Naive thymus-derived CD4-positive, alpha-beta T cell (primary cell): ENCODE measurements at regions of chr6 and their contacts with region 1.

Region 1: DNA sequence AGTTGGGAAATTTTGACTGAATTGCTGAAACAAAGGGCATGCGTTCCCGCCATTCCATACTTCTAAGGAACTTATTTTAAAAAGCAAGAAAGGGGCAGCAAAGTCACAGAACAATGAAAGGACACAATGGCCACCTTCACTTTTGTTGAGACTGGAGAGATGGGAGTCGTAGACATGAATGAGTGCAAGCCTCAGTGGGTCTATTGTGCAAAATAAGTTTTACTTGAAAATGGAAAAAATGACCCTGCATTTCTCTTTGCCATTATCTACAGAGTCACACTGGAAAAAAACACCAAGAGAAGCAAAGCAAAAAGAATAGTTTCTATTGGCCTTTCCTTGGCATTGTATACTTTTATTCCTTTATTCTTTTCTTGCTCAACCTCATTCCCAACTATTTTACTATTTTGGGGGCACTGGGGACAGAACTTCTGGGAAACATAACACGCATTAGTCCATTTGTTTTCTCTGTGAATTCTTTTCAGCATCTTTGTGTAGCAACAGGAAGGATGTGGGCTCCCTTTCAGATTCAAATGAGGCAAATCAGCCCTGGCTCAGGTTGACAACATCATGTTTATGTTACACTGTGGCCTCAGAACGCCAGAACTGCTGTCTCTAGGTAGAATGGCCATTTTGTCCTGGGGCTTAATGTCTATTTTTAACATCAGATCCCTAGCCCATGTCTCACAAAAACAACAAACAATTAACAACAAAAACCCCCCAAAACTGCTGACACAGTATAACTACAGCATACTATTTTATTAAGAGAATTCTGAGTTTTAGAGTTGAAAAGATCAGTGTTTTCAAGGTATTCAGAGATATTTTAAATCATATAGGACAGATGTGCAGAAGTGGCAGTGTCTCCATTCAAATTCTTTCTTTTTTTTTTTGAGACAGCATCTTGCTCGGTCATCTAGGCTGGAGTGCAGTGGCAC is 122.2 kb downstream of the FYN start:
- DNase-seq: peak in 7 of 9 donors; percentile 72 to 85 (median 81)
- ATAC-seq: peak; percentile 94
- H3K4me3 ChIP-seq: peak overlapping the region; percentile 41
- H3K4me3 Mint-ChIP-seq: peak overlapping the region; percentile 58 to 82 (median 73)
- H3K27ac ChIP-seq: peak overlapping the region; percentile 97
- H3K27ac Mint-ChIP-seq: peak overlapping the region; percentile 93 to 100 (median 98)
- H3K4me1 ChIP-seq: peaks cover 94 to 95% of the 10 kb centered on the region in 2 donors
- H3K4me1 Mint-ChIP-seq: peaks cover 67 to 100% (median 99%) of the 10 kb centered on the region in 7 donors
- H3K27me3 ChIP-seq: no peaks in the 10 kb centered on the region
- H3K27me3 Mint-ChIP-seq: no peaks in the 10 kb centered on the region

Region 2: GRCh38 chr6:110554966-110555460 is 1196.0 kb before region 1 on chr6:
- CTCF ChIA-PET with region 1: no interaction called
- POLR2A ChIA-PET with region 1: no interaction called
- intact Hi-C with region 1: no loop called
- DNase-seq: no peak
- ATAC-seq: no peak
- H3K4me3 ChIP-seq: no peak overlapping the region
- H3K4me3 Mint-ChIP-seq: no peak overlapping the region
- H3K27ac ChIP-seq: no peak overlapping the region
- H3K27ac Mint-ChIP-seq: no peak overlapping the region
- H3K4me1 ChIP-seq: peaks cover under 1 to 9% of the 10 kb centered on the region in 2 donors
- H3K4me1 Mint-ChIP-seq: peaks cover 2 to 9% (median 7%) of the 10 kb centered on the region in 7 donors
- H3K27me3 ChIP-seq: no peaks in the 10 kb centered on the region
- H3K27me3 Mint-ChIP-seq: peaks cover 5 to 14% (median 10%) of the 10 kb centered on the region in 5 donors

Region 3: DNA sequence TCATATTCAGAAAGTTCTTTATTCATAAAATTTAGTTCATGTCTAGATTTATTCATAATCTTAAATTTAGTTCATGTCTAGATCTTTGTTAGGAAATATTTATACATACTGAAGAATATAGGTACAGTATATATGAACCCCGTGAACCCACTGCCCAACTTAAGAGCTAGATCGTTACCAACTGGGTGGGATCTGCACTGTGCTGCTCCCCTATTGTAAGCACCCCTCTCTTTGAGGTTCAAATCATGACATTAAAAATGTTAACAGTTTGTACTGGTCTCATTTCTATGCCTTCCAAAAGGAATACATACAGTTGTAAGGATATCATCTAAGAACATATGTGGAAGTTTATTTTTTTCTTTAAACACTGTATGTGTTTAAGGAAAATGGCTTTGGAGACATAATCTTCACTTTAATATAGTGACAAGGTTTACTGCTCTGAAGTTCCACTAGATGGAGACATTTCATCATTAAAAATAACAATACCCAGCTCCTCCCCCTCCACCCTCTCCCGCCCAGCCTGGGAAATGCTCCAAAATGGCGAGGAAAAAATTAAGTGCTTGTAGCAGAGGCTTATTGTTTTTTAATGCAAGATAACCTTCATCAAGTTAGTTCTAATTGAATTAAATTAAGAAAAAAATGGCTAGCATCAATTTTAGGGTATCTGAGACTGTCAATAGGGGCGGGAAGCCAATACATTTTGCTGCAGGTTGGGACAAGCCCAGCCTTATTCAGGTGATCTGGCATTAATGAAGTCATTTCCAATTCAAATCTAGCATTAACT is 41.2 kb before region 1 on chr6:
- CTCF ChIA-PET with region 1: interaction called, 13 read pairs
- POLR2A ChIA-PET with region 1: interaction called, 3 read pairs
- intact Hi-C with region 1: loop called (anchors 1 to 2 kb)
- DNase-seq: peak in 8 of 9 donors; percentile 43 to 78 (median 71)
- ATAC-seq: peak; percentile 89
- H3K4me3 ChIP-seq: no peak overlapping the region
- H3K4me3 Mint-ChIP-seq: peak overlapping the region in 8 of 10 donors; percentile 2 to 67 (median 53)
- H3K27ac ChIP-seq: peak overlapping the region; percentile 59
- H3K27ac Mint-ChIP-seq: peak overlapping the region; percentile 53 to 98 (median 93)
- H3K4me1 ChIP-seq: peaks cover 32 to 43% of the 10 kb centered on the region in 2 donors
- H3K4me1 Mint-ChIP-seq: peaks cover 32 to 64% (median 56%) of the 10 kb centered on the region in 7 donors
- H3K27me3 ChIP-seq: no peaks in the 10 kb centered on the region
- H3K27me3 Mint-ChIP-seq: no peaks in the 10 kb centered on the region

Region 4: DNA sequence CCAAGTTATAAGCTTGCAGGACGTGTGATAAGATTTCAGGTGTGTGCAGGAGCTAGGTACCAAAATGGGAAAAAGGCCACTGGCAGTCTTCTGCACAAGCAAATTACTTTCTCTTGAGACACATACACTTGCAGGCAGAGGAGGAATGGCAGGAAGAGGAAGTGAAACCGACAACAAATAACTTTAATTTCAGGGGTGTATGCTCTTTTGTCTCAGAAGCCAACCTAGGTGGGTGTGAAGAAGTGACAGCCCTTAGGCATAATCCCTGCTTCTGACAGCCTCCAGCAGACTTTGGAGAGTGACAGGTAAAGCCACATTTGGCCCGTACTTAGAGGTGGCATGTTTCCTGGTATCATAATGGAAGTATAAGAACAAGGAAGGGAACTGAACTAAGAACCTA is 26.5 kb before region 1 on chr6:
- CTCF ChIA-PET with region 1: interaction called, 6 read pairs
- POLR2A ChIA-PET with region 1: interaction called, 8 read pairs
- intact Hi-C with region 1: loop called in 1 of 2 experiments (anchors 2 kb)
- DNase-seq: peak in 7 of 9 donors; percentile 26 to 62 (median 56)
- ATAC-seq: peak; percentile 75
- H3K4me3 ChIP-seq: peak overlapping the region; percentile 11
- H3K4me3 Mint-ChIP-seq: peak overlapping the region; percentile 70 to 87 (median 76)
- H3K27ac ChIP-seq: peak overlapping the region; percentile 76
- H3K27ac Mint-ChIP-seq: peak overlapping the region; percentile 87 to 98 (median 92)
- H3K4me1 ChIP-seq: peaks cover 37 to 73% of the 10 kb centered on the region in 2 donors
- H3K4me1 Mint-ChIP-seq: peaks cover 43 to 97% (median 87%) of the 10 kb centered on the region in 7 donors
- H3K27me3 ChIP-seq: no peaks in the 10 kb centered on the region
- H3K27me3 Mint-ChIP-seq: no peaks in the 10 kb centered on the region

Region 5: DNA sequence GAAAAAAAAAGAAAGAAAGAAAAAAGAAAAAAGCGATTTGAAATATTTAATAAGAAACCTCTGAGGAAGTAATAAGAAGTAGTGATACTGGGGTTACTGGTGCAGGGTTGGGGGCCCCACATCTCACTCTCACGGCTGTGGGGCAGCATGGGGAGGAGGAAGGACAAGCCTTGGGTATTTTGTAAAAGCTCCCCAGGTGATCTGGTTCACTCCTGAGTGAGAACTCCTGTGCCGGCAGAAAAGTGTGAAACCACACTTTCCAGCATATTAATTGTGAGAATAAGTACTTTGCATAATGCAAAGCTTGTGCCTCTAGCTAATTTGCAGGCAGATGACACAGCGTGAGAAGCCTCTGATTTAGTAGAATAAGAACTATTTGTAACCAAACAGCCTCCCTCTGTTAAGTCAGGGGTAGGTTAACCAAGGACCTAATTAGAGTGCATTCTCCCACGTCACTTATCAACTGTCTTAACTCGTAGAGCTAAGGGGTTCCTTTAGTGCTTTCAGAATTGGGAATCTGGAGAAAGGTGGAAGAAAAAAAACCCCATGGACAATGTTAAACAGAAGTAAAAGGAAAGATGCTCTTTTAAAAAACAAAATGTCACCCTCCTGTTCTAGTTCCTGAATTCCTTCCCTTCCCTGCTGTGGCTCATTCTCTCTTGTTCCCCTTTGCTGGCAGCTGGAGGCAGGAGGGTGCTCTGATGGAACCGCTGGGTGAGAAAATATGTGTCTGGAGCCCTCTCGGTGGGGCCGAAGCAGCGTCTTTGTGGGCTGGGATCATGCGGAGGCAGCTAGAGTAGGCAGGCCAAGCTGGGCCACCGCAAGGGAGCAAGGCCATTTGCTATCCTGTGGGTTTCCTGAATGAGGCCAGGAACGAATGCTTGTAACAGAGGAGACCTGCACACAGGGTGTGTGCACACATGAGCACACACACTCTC is 13.5 kb after region 1 on chr6:
- CTCF ChIA-PET with region 1: interaction called, 4 read pairs
- POLR2A ChIA-PET with region 1: interaction called, 9 read pairs
- intact Hi-C with region 1: loop called (anchors 1 kb)
- DNase-seq: peak in 2 of 9 donors; percentile 48 to 63
- ATAC-seq: peak; percentile 23
- H3K4me3 ChIP-seq: peak overlapping the region; percentile 18
- H3K4me3 Mint-ChIP-seq: peak overlapping the region; percentile 48 to 94 (median 69)
- H3K27ac ChIP-seq: peak overlapping the region; percentile 97
- H3K27ac Mint-ChIP-seq: peak overlapping the region; percentile 84 to 100 (median 98)
- H3K4me1 ChIP-seq: peaks cover 90 to 93% of the 10 kb centered on the region in 2 donors
- H3K4me1 Mint-ChIP-seq: peaks cover 74 to 100% (median 99%) of the 10 kb centered on the region in 7 donors
- H3K27me3 ChIP-seq: no peaks in the 10 kb centered on the region
- H3K27me3 Mint-ChIP-seq: no peaks in the 10 kb centered on the region

Region 6: DNA sequence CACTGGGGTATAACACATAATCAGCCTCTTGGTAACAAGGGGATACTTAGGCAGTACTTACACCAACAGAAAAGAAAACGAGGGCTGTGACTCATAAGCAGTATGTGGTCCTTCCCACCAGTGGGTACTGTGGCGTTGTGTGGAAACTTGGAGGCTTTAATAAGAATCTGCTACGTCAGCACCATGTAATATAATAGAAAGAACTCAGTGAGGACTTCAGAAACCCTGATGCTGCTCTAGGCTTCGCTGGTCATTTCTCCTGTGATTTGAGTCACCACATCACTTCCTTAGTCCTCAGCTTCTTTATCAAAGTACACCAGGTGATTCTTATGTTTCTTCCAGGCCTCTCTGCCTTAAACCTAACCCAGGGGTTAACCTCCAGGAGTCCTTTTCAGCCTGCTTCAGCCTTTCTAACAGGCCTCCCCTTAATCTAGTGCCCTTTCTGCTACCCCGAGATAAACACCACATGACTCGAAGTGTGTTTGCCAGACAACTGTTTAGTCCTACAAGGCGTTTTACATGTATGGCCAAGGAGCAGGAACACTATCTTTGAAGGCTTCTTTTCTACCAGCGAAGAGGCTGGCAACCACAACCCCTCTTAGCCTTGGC is 53.7 kb after region 1 on chr6:
- CTCF ChIA-PET with region 1: no interaction called
- POLR2A ChIA-PET with region 1: interaction called, 8 read pairs
- intact Hi-C with region 1: loop called (anchors 1 to 2 kb)
- DNase-seq: peak in 8 of 9 donors; percentile 31 to 77 (median 56)
- ATAC-seq: peak; percentile 89
- H3K4me3 ChIP-seq: peak overlapping the region; percentile 7
- H3K4me3 Mint-ChIP-seq: peak overlapping the region; percentile 20 to 73 (median 64)
- H3K27ac ChIP-seq: peak overlapping the region; percentile 68
- H3K27ac Mint-ChIP-seq: peak overlapping the region; percentile 78 to 97 (median 92)
- H3K4me1 ChIP-seq: peaks cover 59 to 64% of the 10 kb centered on the region in 2 donors
- H3K4me1 Mint-ChIP-seq: peaks cover 54 to 96% (median 88%) of the 10 kb centered on the region in 7 donors
- H3K27me3 ChIP-seq: no peaks in the 10 kb centered on the region
- H3K27me3 Mint-ChIP-seq: no peaks in the 10 kb centered on the region